OCI-LY7 (cell line): ENCODE measurements at regions of chr13 and their contacts with region 1.

Region 1: DNA sequence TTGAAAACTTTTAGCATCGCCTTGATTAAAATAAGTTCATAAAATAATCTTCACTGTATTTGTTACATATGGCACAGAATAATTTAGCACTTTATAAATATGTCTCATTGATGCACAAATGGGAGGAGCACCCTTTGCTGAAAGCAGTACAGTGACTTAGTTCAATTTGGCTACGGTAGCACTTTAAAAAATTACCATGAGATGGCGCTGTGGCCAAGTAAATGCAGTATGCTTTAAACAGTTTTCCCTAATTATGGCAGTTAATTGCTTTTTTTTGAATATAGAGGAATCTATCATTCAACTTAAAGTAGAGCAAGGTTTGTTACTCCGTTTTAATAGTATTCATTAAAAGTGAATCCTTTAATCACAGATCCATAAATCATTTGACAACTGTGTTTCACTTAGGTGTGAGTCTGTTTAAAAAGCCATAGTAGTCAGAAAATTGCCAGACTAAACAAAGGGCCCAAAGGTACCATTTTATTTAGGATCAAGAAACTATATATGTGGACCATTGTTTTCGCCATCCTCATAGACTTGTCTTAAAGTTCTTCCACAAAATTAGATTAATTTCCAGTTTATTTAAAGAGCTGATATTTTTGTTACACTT is 34.7 kb upstream of the ESD start:
- DNase-seq: peak; percentile 58
- H3K4me3 ChIP-seq: no peak overlapping the region
- H3K27ac ChIP-seq: no peak overlapping the region
- H3K4me1 ChIP-seq: no peaks in the 10 kb centered on the region
- CTCF ChIP-seq: peak; percentile 97

Region 2: DNA sequence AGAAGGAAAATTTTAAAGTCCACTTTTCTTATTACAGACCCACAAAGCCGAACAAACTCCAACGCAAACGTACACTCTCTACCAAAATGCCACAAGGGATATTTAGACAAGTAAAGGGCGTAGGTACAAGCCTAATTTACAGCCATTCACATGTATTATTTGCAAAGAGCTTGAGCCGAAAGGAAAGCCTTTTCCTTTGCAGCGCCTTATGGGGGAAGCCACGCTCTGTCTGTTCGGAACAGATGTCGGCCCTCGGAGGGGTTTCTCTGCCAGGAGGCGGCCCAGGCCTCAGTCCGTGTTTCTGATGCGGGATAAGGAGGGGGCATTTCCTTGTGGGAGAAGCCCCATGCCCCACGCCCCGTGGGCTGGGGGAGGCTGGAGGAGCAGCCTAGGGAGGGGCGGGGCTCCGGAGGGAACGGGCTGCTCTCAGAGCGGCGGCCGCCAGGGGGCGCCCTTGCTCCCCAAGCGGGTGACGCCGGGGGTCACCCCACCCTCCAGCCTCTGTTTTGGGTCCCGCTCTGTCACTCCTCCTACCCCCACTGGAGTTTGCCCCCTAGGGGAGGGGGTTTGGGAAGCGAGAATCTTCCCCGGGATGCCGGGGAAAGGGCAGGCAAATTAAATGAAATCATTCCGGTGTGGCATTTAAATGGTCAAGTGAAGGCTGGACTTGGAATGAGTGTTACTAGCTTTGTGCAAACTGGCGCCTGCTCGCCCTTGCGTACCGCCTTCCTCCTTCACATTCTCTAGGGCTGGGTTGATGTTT is 62.3 kb after region 1 on chr13:
- CTCF ChIA-PET with region 1: no interaction called
- POLR2A ChIA-PET with region 1: no interaction called
- intact Hi-C with region 1: no loop called
- DNase-seq: peak; percentile 69
- H3K4me3 ChIP-seq: no peak overlapping the region
- H3K27ac ChIP-seq: no peak overlapping the region
- H3K4me1 ChIP-seq: no peaks in the 10 kb centered on the region
- CTCF ChIP-seq: peak; percentile 96

Region 3: GRCh38 chr13:47598340-47598911 is 766.7 kb after region 1 on chr13:
- CTCF ChIA-PET with region 1: no interaction called
- POLR2A ChIA-PET with region 1: no interaction called
- intact Hi-C with region 1: loop called (anchors 5 kb)
- DNase-seq: peak; percentile 11
- H3K4me3 ChIP-seq: no peak overlapping the region
- H3K27ac ChIP-seq: no peak overlapping the region
- H3K4me1 ChIP-seq: no peaks in the 10 kb centered on the region
- CTCF ChIP-seq: peak; percentile 77

Region 4: DNA sequence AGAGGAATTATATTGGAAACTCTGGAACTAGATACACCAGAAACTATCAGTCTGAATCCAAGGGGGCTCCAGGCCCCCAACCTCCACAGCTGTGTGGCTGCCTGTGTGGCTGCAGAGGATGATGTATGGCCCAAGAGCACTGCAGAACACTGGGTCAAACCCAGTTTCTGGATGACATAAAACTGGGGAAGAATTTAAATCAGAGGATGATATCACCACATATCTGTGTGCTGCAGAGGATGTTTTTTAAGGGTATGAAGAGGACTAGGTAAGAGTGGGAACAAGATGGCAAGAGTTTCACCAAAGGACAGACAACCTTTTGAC is 942.9 kb after region 1 on chr13:
- CTCF ChIA-PET with region 1: no interaction called
- POLR2A ChIA-PET with region 1: no interaction called
- intact Hi-C with region 1: loop called (anchors 2 kb)
- DNase-seq: no peak
- H3K4me3 ChIP-seq: no peak overlapping the region
- H3K27ac ChIP-seq: no peak overlapping the region
- H3K4me1 ChIP-seq: no peaks in the 10 kb centered on the region
- CTCF ChIP-seq: no peak